Ascending aorta (tissue), 2 donors: ENCODE measurements at regions of chr20 and their contacts with region 1.

Region 1: GRCh38 chr20:13546497-13547131 is 92.1 kb downstream of the TASP1 start:
- DNase-seq: peak in 1 of 2 donors; percentile 86
- H3K4me3 ChIP-seq: no peak overlapping the region
- H3K27ac ChIP-seq: no peak overlapping the region
- H3K4me1 ChIP-seq: peaks cover 0 to 7% of the 10 kb centered on the region in 2 donors
- H3K27me3 ChIP-seq: no peaks in the 10 kb centered on the region
- CTCF ChIP-seq: peak; percentile 47 to 67 (median 64)

Region 2: DNA sequence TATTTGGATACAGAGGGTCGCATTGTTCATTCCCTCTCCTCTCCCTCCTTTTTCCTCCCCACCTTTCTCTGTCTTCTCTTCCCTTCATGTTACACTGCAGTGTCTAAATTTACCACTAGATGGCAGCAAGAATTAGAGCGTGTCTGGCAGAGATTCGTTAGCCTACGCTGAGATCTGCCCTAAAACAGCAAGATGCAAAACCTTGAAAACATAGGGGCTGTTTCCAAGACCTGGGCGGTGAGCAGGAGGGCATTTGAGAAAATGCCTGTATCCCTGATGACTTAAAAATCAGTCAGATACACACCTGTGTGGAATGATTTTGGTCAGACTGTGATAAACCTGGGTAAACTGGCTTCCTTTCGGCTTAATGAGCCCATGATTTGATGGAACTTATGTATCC is 427.0 kb before region 1 on chr20:
- intact Hi-C with region 1: loop called (anchors 5 kb)
- DNase-seq: no peak
- H3K4me3 ChIP-seq: no peak overlapping the region
- H3K27ac ChIP-seq: no peak overlapping the region
- H3K4me1 ChIP-seq: no peaks in the 10 kb centered on the region
- H3K27me3 ChIP-seq: no peaks in the 10 kb centered on the region
- CTCF ChIP-seq: peak; percentile 71 to 88 (median 79)

Region 3: GRCh38 chr20:13325033-13325432 is 221.6 kb before region 1 on chr20:
- intact Hi-C with region 1: loop called (anchors 10 kb)
- DNase-seq: no peak
- H3K4me3 ChIP-seq: no peak overlapping the region
- H3K27ac ChIP-seq: no peak overlapping the region
- H3K4me1 ChIP-seq: no peaks in the 10 kb centered on the region
- H3K27me3 ChIP-seq: no peaks in the 10 kb centered on the region
- CTCF ChIP-seq: peak in 1 of 3 experiments; percentile 45

Region 4: DNA sequence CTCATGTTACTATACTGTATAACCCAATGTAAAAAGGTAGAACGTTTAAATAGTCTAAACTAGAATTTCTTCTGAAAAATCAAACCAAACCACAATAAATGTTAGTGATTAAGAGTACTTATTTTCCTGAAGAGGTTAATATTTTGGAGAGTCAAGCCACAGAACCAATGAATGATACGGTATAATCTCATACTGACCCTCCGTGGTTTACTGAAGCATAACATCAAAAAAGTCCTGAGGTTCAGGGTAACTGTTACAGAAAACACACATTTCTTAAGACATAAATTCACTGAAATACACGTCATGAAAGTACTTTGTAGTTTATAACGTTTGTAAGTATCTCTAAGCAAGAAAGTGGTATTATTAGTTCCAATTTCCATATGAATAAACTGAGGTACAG is 209.2 kb after region 1 on chr20:
- intact Hi-C with region 1: loop called (anchors 5 kb)
- DNase-seq: no peak
- H3K4me3 ChIP-seq: no peak overlapping the region
- H3K27ac ChIP-seq: peak overlapping the region; percentile 47 to 51
- H3K4me1 ChIP-seq: peaks cover 0 to 2% of the 10 kb centered on the region in 2 donors
- H3K27me3 ChIP-seq: no peaks in the 10 kb centered on the region
- CTCF ChIP-seq: peak in 2 of 3 experiments; percentile 38 to 57